CD8-positive, alpha-beta T cell (primary cell): ENCODE measurements at regions of chr2 and their contacts with region 1.

Region 1: DNA sequence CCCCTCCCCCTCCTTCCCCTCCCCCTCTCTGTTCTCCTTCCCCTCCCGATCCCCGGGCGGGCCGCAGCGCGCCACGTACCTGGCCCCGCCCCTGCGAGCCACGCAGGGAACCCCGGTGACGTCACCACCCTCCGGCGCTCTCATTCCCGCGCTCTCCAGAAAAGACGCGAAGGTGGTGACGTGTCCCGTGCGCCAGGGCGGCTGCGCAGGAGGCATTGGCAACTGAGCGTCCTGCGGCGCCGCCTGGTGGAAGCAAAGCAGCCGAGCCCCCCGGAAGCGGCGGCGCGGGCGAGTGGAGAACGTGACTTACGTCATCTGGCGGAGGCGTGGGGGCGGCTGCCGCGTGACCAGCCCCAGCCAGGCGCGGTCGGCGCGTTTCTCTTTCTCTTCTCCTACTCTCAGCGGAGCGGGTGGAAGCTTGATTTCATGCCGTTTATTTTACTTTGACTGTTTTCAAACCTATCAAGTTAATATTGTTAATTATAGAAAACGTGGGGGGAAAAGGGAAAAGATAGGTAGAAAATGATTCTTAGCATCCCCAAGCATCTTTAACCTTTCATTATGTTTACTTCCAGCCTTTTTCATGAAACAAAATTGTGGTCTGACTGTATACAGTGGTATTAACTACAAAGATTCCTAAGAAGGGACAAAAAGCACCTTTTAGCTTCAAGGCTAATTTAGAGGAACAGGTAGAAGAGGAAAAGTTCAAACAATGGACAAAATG is 48.1 kb downstream of the C2orf42 start:
- DNase-seq: peak; percentile 99 to 100 (median 100)
- ATAC-seq: peak; percentile 73
- H3K4me3 ChIP-seq: peak overlapping the region; percentile 54 to 56
- H3K4me3 Mint-ChIP-seq: peak overlapping the region; percentile 91
- H3K27ac ChIP-seq: peak overlapping the region; percentile 89 to 97
- H3K27ac Mint-ChIP-seq: peak overlapping the region; percentile 100
- H3K4me1 ChIP-seq: peaks cover 49% of the 10 kb centered on the region
- H3K4me1 Mint-ChIP-seq: peaks cover 53% of the 10 kb centered on the region
- H3K27me3 ChIP-seq: no peaks in the 10 kb centered on the region
- H3K27me3 Mint-ChIP-seq: no peaks in the 10 kb centered on the region
- CTCF ChIP-seq: peak; percentile 89

Region 2: GRCh38 chr2:69946351-69947077 is 196.2 kb before region 1 on chr2:
- CTCF ChIA-PET with region 1: no interaction called
- POLR2A ChIA-PET with region 1: interaction called, 5 read pairs
- intact Hi-C with region 1: loop called in 1 of 2 experiments (anchors 1 kb)
- DNase-seq: peak in 8 of 9 experiments; percentile 18 to 79 (median 58)
- ATAC-seq: peak; percentile 90
- H3K4me3 ChIP-seq: peak overlapping the region in 1 of 2 experiments; percentile 18
- H3K4me3 Mint-ChIP-seq: peak overlapping the region; percentile 51
- H3K27ac ChIP-seq: peak overlapping the region in 1 of 2 experiments; percentile 71
- H3K27ac Mint-ChIP-seq: peak overlapping the region; percentile 37
- H3K4me1 ChIP-seq: peaks cover 20% of the 10 kb centered on the region
- H3K4me1 Mint-ChIP-seq: peaks cover 27% of the 10 kb centered on the region
- H3K27me3 ChIP-seq: no peaks in the 10 kb centered on the region
- H3K27me3 Mint-ChIP-seq: no peaks in the 10 kb centered on the region
- CTCF ChIP-seq: no peak

Region 3: GRCh38 chr2:70086838-70087701 is 55.7 kb before region 1 on chr2 and contains the start of gene PCBP1:
- CTCF ChIA-PET with region 1: interaction called, 196 read pairs
- POLR2A ChIA-PET with region 1: interaction called, 495 read pairs
- intact Hi-C with region 1: loop called (anchors 1 kb)
- DNase-seq: peak; percentile 95 to 100 (median 98)
- ATAC-seq: peak; percentile 60
- H3K4me3 ChIP-seq: peak within 1 kb of the TSS; percentile 95 to 98
- H3K4me3 Mint-ChIP-seq: peak within 1 kb of the TSS; percentile 98
- H3K27ac ChIP-seq: peak within 1 kb of the TSS; percentile 99
- H3K27ac Mint-ChIP-seq: peak within 1 kb of the TSS; percentile 100
- H3K4me1 ChIP-seq: peaks cover 62% of the 10 kb centered on the region
- H3K4me1 Mint-ChIP-seq: peaks cover 69% of the 10 kb centered on the region
- H3K27me3 ChIP-seq: no peaks in the 10 kb centered on the region
- H3K27me3 Mint-ChIP-seq: no peaks in the 10 kb centered on the region
- CTCF ChIP-seq: no peak
- total RNA-seq, gene PCBP1: 239 to 255 TPM

Region 4: GRCh38 chr2:70124983-70125480 is 17.7 kb before region 1 on chr2:
- CTCF ChIA-PET with region 1: interaction called, 12 read pairs
- POLR2A ChIA-PET with region 1: interaction called, 183 read pairs
- intact Hi-C with region 1: loop called (anchors 1 kb)
- DNase-seq: peak; percentile 52 to 85 (median 70)
- ATAC-seq: peak; percentile 64
- H3K4me3 ChIP-seq: peak overlapping the region; percentile 47 to 61
- H3K4me3 Mint-ChIP-seq: peak overlapping the region; percentile 95
- H3K27ac ChIP-seq: peak overlapping the region; percentile 97
- H3K27ac Mint-ChIP-seq: peak overlapping the region; percentile 100
- H3K4me1 ChIP-seq: peaks cover 62% of the 10 kb centered on the region
- H3K4me1 Mint-ChIP-seq: peaks cover 70% of the 10 kb centered on the region
- H3K27me3 ChIP-seq: no peaks in the 10 kb centered on the region
- H3K27me3 Mint-ChIP-seq: no peaks in the 10 kb centered on the region
- CTCF ChIP-seq: no peak